ENCODE measurements at regions of chr1 and their contacts with region 1.

Region 1: DNA sequence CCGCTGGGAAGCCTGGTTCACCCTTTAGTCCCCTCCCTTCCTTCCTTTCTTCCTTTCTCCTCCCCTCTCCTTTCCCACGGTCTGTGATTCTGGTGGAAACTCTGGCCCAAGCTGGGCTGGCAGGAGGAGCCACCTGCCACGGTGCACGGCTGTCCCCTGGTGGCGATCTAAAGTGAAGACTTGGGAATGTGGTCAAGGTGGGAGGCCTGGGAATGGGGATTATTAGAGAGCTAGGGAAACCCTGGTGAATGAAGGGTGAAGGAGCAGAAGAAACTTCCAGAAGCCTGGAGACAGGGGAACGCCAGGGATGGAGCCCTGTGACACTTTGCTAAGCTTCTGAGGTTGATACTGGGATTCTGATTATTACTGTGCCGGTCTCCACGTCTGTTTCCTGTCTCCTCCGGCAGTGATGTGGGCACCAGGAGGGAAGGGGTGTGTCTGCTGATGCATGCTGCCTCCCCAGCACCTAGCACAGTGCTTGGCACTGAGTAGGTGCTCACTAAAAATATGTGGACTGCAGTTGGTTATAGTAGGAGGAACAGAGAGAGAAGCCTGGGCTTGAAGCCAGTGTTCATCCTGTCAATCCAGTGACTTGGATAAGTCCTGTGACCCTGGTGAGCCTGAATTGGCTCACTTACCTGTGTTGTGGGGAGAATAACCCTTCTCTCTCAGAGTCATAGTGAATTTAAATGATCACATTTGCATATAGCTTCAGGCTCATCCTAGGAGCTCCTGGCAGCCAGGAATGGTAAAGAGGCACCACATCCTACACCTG is 71.2 kb upstream of the NBPF3 start:
- DNase-seq: peak; percentile 77 to 85
- H3K4me3 ChIP-seq: no peak overlapping the region
- H3K27ac ChIP-seq: no peak overlapping the region
- H3K4me1 ChIP-seq: no peaks in the 10 kb centered on the region
- H3K27me3 ChIP-seq: no peaks in the 10 kb centered on the region
- CTCF ChIP-seq: peak; percentile 99 to 100

Region 2: DNA sequence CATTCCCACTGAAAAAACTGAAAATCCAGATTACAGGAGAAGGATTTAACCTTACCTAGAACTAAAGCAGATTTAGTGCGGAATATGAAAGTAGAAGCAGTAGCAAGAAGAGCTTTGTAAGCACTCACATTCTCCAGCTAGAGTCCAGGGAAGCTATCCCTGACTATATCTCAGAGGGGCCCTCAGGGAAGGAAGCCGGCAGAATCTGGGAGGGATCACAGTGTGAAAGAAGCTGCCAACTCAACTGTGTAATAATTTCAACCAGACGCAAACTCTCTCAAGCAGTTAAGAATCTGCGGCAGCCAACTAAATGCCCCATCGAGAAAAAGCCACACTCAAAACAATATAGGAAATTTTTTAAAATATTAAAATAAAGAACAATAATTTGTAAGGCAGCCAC is 355.8 kb before region 1 on chr1:
- intact Hi-C with region 1: no loop called
- DNase-seq: no peak
- H3K4me3 ChIP-seq: no peak overlapping the region
- H3K27ac ChIP-seq: no peak overlapping the region
- H3K4me1 ChIP-seq: no peaks in the 10 kb centered on the region
- H3K27me3 ChIP-seq: no peaks in the 10 kb centered on the region
- CTCF ChIP-seq: no peak

Region 3: DNA sequence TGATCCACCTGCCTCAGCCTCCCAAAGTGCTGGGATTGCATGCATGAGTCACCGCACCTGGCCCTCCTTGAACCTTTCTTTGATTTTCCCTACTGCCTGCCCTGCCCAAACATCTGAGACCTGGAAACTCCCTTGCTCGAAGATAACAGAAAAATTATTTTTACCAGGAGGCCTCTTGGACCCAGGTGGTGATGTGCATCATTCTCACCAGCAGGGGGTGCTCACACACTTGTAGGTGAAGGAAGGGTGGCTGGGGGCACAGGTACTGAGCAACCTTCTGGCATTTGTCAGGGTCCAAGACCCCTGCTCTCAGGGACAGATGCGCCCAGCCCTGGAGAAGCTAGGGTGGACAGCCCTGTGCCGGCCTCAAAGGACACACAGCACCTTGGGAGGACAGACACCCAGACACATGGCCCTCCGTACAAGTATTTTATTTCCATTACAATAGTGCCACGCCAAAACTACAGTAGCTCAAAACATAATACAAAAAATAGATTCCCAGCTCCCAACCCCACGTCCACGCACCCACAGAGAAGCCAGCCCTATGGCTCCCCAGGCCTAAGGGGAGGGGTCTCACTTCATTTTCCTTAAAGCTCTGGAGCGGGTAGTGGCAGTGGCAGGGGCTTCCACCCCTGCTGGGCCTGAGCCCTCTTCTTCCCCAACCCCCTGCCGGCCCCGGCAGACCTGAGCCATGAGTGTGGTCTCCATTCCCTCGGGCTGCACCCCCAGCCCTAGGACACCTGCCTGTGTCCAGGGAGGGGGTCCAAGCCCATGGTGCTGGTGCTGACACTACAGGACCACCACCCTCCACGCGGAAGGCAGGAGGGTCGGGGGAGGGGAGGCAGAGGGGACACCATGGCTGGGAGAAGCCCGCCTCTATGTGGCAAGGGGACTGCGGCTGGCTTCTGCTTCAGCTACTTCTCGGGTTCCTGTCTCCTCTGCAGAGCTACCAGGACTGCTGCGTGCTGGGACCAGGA is 151.6 kb before region 1 on chr1:
- intact Hi-C with region 1: loop called (anchors 5 kb)
- DNase-seq: peak in 1 of 2 donors; percentile 55
- H3K4me3 ChIP-seq: no peak overlapping the region
- H3K27ac ChIP-seq: no peak overlapping the region
- H3K4me1 ChIP-seq: no peaks in the 10 kb centered on the region
- H3K27me3 ChIP-seq: no peaks in the 10 kb centered on the region
- CTCF ChIP-seq: peak; percentile 71 to 73

Region 4: DNA sequence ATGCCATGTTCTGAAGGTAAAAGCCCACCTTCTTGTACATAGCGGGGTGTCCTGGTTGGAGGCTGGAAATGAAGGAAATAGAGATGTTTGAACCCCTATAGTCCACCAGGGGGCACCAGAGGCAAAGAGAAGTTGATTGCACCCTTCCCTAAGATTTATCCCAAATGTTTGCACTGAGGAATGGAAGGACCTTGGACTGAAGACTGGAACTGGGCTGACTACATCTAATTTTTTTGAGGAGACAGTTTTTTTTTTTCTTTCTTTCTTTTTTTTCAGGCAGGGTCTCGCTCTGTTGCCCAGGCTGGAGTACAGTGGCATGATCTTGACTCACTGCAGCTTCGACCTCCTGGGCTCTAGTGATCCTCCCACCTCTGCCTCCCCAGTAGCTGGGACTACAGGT is 136.7 kb before region 1 on chr1:
- intact Hi-C with region 1: loop called (anchors 2 kb)
- DNase-seq: no peak
- H3K4me3 ChIP-seq: no peak overlapping the region
- H3K27ac ChIP-seq: no peak overlapping the region
- H3K4me1 ChIP-seq: no peaks in the 10 kb centered on the region
- H3K27me3 ChIP-seq: no peaks in the 10 kb centered on the region
- CTCF ChIP-seq: peak; percentile 72 to 87

Region 5: GRCh38 chr1:21244986-21245687 is 123.6 kb before region 1 on chr1:
- intact Hi-C with region 1: no loop called
- DNase-seq: no peak
- H3K4me3 ChIP-seq: no peak overlapping the region
- H3K27ac ChIP-seq: no peak overlapping the region
- H3K4me1 ChIP-seq: no peaks in the 10 kb centered on the region
- H3K27me3 ChIP-seq: no peaks in the 10 kb centered on the region
- CTCF ChIP-seq: no peak

Region 6: DNA sequence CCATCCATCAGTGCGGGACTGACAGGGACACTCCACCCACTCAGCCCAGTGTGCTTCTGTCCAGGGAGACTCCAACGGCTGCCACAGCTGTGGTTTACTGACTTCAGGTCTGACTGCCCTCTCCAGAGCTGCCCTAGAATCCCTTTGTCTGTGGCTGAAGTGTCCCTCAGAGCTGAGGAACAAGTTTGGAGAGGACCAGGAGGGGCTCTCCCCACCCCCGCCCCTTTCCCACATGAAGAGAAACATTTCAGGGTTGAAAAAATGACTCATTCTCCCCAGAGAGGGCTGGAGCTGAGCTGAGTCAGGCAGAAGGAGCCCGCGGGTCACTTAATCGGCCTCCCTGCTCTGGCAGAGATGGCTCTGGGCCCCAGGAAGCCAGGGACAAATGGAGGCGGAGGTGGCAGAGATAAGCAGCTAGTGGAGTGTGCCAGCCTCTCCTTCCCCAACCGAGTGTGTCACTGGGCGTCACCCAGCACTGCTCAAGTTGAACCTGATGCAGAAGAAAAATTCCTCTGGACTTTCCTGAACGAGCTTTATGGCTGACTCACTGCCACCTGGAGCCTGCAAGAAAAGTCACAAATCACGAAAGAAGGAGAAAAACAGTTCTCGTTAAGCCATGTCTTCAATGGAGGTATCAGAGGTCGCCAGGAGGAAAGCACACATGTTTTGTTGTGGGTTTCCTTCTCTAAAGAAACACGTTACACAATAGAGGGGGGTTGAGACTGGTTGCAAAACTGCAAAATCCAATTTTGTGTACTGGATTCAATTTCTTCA is 44.1 kb before region 1 on chr1:
- intact Hi-C with region 1: no loop called
- DNase-seq: peak; percentile 88 to 97
- H3K4me3 ChIP-seq: peak overlapping the region; percentile 21 to 25
- H3K27ac ChIP-seq: peak overlapping the region; percentile 94 to 95
- H3K4me1 ChIP-seq: peaks cover 5 to 100% (median 94%) of the 10 kb centered on the region in 4 donors
- H3K27me3 ChIP-seq: no peaks in the 10 kb centered on the region
- CTCF ChIP-seq: no peak

Region 7: DNA sequence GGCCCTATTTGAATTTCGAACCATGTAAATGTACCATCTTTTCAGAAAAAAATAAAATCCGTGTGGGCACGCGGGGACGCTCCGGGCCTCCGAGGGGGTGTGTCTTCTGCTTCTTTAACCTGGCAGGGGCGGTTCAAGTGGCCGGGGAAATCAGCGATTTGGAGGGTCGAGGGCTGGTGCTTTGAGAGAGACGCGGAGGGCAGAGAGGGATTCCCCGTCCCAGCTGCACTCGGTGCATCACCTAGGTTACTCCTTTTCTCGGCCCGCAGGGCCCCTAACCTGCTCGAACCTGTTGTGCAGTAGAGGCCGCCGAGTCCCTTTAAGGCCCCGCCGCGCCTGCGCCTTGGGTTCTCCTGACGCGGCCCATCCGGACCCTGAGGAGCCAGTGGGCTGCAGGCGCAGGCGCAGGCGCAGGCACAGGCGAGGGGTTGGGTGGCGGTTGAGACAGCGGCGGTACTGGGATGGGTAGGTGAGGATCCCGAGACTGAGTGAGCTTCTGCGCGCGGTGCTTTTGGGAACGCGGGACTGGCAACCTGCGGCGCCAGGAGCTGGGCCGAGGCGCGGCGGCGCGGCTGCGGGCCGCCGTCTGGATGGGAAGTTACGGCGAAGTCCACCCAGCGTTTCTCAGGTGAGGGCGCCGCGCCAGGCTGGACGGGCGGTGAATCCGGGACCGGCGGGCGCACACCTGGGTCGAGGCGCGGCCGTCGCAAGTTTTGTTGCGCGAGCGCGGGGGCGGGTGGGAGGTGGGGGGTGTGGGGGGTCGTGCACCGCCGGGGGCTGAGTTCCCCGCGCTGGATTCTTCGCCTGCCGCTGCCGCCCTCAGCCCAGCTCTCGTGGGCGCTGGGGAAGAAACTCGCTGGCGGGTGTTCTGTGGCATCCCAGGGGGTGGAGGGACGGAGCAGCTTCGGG is 71.3 kb after region 1 on chr1 and contains the start of gene NBPF3:
- intact Hi-C with region 1: no loop called
- DNase-seq: peak; percentile 74 to 87
- H3K4me3 ChIP-seq: peak within 1 kb of the TSS; percentile 50 to 70
- H3K27ac ChIP-seq: no peak within 1 kb of the TSS
- H3K4me1 ChIP-seq: peaks cover 3 to 27% (median 11%) of the 10 kb centered on the region in 4 donors
- H3K27me3 ChIP-seq: peaks cover 0 to 24% of the 10 kb centered on the region in 2 donors
- CTCF ChIP-seq: no peak